ENCODE measurements at regions of chr20 and their contacts with region 1.

Region 1: GRCh38 chr20:52649727-52650126 is 322.4 kb upstream of the TSHZ2 start:
- DNase-seq: no peak
- ATAC-seq: no peak
- H3K4me3 Mint-ChIP-seq: no peak overlapping the region
- H3K27ac Mint-ChIP-seq: no peak overlapping the region
- H3K4me1 Mint-ChIP-seq: no peaks in the 10 kb centered on the region
- H3K27me3 Mint-ChIP-seq: no peaks in the 10 kb centered on the region
- CTCF ChIP-seq: no peak

Region 2: DNA sequence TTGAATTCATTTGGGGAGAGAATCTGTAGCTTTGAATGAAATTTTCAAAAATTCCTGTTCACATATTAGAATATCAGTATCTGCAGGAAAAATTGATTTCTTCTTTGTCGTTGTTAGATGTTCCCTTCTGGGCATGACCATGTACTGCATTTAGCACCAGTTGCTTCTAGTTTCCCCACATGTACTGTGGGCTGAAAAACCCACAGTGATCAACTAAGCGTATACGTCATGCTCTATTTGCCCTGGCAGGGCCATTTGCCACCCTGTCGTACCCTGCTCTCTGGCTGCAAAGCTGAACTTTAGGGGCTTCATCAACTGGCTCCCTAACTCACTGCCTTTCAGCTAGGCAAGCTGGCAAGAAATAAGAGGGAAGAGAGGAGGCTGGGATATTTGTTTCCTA is 18.3 kb before region 1 on chr20:
- CTCF ChIA-PET with region 1: no interaction called
- POLR2A ChIA-PET with region 1: no interaction called
- intact Hi-C with region 1: no loop called
- DNase-seq: no peak
- ATAC-seq: no peak
- H3K4me3 Mint-ChIP-seq: no peak overlapping the region
- H3K27ac Mint-ChIP-seq: no peak overlapping the region
- H3K4me1 Mint-ChIP-seq: no peaks in the 10 kb centered on the region
- H3K27me3 Mint-ChIP-seq: peaks cover 2% of the 10 kb centered on the region
- CTCF ChIP-seq: no peak

Region 3: GRCh38 chr20:52859156-52859876 is 209.6 kb after region 1 on chr20:
- CTCF ChIA-PET with region 1: no interaction called
- POLR2A ChIA-PET with region 1: no interaction called
- intact Hi-C with region 1: no loop called
- DNase-seq: no peak
- ATAC-seq: no peak
- H3K4me3 Mint-ChIP-seq: no peak overlapping the region
- H3K27ac Mint-ChIP-seq: no peak overlapping the region
- H3K4me1 Mint-ChIP-seq: no peaks in the 10 kb centered on the region
- H3K27me3 Mint-ChIP-seq: peaks cover 3% of the 10 kb centered on the region
- CTCF ChIP-seq: no peak

Region 4: GRCh38 chr20:53195876-53196610 is 546.3 kb after region 1 on chr20:
- CTCF ChIA-PET with region 1: no interaction called
- POLR2A ChIA-PET with region 1: no interaction called
- intact Hi-C with region 1: loop called (anchors 5 kb)
- DNase-seq: no peak
- ATAC-seq: no peak
- H3K4me3 Mint-ChIP-seq: no peak overlapping the region
- H3K27ac Mint-ChIP-seq: no peak overlapping the region
- H3K4me1 Mint-ChIP-seq: no peaks in the 10 kb centered on the region
- H3K27me3 Mint-ChIP-seq: peaks cover 14% of the 10 kb centered on the region
- CTCF ChIP-seq: no peak

Measured in activated B cell treated with CpG ODN at 0.5 μM for 24 hours (primary cell).